Activated CD4-positive, alpha-beta T cell treated with anti-CD3 and anti-CD28 coated beads, Interleukin-2, amount 10 ng/mL, durations not matched to agents 24 days and 14 days (primary cell): ENCODE measurements at regions of chr22 and their contacts with region 1.

Region 1: DNA sequence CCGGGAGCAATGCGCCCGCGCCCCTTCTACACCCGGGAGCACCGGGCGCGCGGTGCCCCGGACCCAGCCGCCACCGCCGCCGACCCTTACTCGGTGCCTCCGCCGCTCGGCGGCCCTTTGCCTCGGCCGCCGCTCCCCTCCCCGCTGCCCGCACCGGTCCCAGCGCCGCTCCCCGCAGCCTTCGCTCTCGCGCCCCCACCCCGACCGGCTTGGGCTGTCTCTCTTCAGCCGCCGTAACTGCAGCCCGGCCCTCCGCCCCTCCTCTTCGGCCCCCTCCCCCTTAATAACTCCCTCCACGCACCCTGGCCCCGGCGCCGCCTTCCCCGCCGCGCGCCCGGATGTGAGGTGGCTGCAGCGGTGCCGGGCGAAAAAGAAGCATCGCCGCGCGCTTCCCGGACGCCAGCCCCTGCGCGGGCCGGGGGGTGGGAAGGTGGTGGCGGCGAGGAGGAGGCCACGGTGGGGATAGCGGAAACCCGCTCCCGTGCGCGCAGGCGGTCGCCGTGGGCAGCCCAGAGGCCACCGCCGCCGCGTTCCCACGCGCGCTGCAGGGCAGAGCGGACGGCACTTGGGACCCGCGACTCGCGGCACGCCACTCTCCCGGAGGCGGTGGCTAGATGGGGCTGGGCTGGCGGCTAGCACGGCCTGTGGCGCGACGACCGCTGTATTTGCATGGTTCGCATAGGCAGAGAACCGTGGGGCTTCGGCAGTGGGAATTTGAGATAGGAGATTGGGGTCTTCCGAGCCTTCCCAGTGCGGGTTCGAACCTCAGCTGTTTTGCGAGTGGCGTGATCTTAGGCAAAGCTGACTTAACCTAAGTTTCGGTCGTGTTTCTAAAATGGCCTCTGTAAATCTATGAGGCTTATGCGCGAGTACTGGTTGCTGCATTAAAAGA is at the start of gene EIF4ENIF1:
- DNase-seq: peak; percentile 95
- H3K4me3 Mint-ChIP-seq: peak within 1 kb of the TSS; percentile 90
- H3K27ac Mint-ChIP-seq: peak within 1 kb of the TSS; percentile 99
- H3K4me1 Mint-ChIP-seq: peaks cover 42% of the 10 kb centered on the region
- H3K27me3 Mint-ChIP-seq: no peaks in the 10 kb centered on the region
- total RNA-seq, gene EIF4ENIF1: 78.1 and 85.6 TPM in 2 replicates

Region 2: DNA sequence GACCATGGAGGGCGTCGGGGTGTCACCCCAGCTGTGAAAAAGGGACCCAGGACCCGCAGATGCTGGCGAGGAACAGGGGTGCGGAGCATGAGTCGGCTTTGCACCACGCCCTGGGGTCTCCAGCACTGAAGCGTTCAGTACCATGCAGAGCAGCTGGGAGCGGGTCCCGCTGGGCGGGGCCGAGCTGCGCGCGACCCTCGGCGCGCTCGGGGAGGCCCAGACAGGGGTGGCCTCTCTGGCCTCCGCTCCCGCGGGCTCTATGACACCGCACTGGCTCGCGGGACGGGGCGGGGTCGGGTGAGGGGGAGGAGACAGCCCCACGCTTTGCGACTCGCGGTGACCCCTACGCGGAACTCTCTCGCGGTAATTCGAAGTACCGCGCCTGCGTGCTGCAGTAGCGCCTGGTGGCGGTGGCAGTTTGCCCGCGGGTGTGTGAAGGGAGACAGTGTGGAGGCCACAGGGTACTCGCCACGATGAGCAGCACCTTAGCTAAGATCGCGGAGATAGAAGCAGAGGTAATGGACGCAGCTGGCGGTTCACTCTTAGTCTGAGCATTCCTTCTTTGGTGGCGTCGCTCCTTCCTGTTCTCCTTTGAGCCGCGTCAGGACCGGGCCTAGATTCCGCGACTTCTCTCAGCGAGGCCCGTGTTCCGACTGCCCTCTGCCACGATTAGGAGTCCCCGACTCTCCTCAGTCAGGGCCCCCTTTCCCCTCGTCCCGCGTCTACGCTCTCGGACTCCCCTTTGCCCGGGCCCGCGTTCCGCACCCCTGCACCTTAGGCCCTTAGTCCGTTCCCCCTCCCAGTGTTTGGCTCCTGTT is 90.4 kb before region 1 on chr22 and contains the start of gene DRG1:
- intact Hi-C with region 1: loop called (anchors 2 kb)
- DNase-seq: peak; percentile 99
- H3K4me3 Mint-ChIP-seq: peak within 1 kb of the TSS; percentile 100
- H3K27ac Mint-ChIP-seq: peak within 1 kb of the TSS; percentile 94
- H3K4me1 Mint-ChIP-seq: peaks cover 16% of the 10 kb centered on the region
- H3K27me3 Mint-ChIP-seq: peaks cover under 1% of the 10 kb centered on the region
- total RNA-seq, gene DRG1: 114 and 117 TPM in 2 replicates

Region 3: GRCh38 chr22:31526270-31526669 is 36.4 kb after region 1 on chr22:
- intact Hi-C with region 1: loop called (anchors 1 kb)
- DNase-seq: peak; percentile 73
- H3K4me3 Mint-ChIP-seq: peak overlapping the region; percentile 64
- H3K27ac Mint-ChIP-seq: peak overlapping the region; percentile 96
- H3K4me1 Mint-ChIP-seq: peaks cover 47% of the 10 kb centered on the region
- H3K27me3 Mint-ChIP-seq: no peaks in the 10 kb centered on the region

Region 4: DNA sequence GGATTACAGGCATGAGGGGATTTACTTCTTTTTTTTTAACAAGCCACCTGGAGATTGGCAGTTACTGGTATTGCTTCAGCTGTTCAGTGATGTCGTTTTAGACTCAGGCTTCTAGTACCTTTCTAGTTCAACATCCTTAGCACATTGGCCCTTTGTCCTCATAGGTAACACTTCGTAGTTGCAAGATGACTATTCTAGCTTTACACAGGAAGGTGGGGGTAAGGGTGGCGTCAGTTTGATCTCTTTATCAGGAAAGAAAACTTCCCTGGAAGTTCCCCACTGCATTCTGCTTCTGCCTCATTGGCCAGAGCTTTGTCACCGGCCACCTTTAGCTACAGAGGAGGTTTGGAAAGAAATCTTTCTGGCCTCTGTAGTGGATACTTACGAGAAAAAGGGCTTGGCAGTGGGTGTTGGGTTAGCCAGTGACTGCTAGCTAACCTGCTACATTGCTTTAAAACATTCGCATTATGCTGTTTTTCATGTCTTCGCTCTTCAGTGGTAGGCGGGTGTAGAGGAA is 47.2 kb after region 1 on chr22:
- intact Hi-C with region 1: loop called (anchors 1 kb)
- DNase-seq: peak; percentile 84
- H3K4me3 Mint-ChIP-seq: peak overlapping the region; percentile 76
- H3K27ac Mint-ChIP-seq: peak overlapping the region; percentile 99
- H3K4me1 Mint-ChIP-seq: peaks cover 54% of the 10 kb centered on the region
- H3K27me3 Mint-ChIP-seq: no peaks in the 10 kb centered on the region